AG04450 (cell line): ENCODE measurements at regions of chr5 and their contacts with region 1.

Region 1: DNA sequence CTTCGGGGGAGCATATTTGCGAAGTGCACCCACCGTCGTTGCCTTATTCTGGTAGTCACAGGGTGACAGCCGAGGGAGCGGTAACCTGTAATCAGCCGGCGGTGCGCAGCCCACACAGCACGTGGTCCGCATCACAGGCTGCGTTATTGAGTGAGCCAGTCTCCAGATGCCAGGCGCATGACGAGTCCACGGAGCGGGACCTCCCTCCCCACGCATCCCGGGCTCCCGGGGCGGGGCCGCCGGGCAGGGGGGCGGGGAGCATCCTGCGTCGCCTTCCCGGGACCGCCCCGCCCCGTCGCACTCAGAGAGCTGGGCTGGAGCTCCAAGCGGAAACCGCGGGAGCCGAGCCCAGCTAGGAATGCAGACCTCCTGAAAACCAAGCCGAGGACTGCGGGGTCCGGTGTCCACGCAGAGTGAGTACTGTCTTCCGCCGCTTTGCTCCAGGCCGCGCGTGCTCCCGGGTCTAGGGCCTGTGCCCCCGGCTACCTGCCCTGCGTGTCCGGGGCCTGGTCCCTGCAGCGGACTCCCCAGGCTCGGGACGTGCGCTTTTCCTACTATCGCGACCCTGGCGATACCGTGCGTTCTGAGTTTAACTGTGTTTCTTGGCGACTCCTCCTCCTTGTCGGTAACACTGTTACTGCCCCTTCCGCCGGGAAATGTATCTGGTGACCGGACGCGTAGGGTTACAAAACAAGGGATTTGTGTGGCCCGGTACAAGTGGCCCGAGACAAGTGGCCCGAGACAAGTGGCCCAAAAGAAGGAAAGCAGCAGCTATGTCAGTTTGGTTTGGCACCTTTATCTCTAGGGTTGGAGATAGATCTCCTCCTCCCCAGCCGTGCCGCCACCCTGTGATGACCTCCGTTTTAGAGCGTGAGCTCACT is 40.6 kb downstream of the CAST start:
- DNase-seq: peak; percentile 87
- H3K4me3 ChIP-seq: peak overlapping the region; percentile 74
- H3K27ac ChIP-seq: peak overlapping the region; percentile 94
- H3K27me3 ChIP-seq: no peaks in the 10 kb centered on the region
- CTCF ChIP-seq: no peak

Region 2: DNA sequence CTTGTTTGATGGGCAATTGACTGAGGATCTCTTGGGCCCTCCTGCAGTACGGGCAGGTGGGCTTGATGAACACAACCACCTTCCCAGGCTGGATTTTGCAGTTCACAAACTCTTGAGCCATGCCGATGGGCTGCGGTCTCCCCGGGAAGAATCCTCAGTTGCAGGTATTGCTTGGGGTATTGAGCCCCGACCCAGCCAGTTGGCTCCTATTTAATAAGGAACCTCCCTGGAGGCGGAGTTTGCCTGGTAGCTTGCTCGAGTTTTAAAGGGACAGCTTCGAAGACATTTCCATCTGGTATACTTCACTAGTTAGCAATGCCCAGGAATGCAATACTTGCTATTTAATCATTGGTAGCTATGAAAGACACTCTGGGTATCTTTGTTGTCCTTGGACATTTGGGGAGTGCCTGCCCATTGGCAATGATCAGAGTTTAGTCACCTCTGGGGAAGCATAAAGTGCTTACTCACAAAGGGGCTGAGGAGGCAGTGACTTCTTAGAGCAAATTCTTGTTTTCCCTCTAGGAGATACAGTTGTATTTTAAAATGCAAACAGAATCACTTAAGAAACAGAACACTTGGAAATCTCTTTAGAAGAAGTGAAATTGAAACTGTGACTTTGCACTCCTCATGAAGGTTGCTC is 880.1 kb before region 1 on chr5 and contains the start of gene GLRX:
- CTCF ChIA-PET with region 1: no interaction called
- POLR2A ChIA-PET with region 1: interaction called, 11 read pairs
- DNase-seq: peak; percentile 59
- H3K4me3 ChIP-seq: peak within 1 kb of the TSS; percentile 94
- H3K27ac ChIP-seq: peak within 1 kb of the TSS; percentile 100
- H3K27me3 ChIP-seq: no peaks in the 10 kb centered on the region
- CTCF ChIP-seq: no peak
- polyA plus RNA-seq, gene GLRX: 233 and 306 TPM in 2 replicates

Region 3: DNA sequence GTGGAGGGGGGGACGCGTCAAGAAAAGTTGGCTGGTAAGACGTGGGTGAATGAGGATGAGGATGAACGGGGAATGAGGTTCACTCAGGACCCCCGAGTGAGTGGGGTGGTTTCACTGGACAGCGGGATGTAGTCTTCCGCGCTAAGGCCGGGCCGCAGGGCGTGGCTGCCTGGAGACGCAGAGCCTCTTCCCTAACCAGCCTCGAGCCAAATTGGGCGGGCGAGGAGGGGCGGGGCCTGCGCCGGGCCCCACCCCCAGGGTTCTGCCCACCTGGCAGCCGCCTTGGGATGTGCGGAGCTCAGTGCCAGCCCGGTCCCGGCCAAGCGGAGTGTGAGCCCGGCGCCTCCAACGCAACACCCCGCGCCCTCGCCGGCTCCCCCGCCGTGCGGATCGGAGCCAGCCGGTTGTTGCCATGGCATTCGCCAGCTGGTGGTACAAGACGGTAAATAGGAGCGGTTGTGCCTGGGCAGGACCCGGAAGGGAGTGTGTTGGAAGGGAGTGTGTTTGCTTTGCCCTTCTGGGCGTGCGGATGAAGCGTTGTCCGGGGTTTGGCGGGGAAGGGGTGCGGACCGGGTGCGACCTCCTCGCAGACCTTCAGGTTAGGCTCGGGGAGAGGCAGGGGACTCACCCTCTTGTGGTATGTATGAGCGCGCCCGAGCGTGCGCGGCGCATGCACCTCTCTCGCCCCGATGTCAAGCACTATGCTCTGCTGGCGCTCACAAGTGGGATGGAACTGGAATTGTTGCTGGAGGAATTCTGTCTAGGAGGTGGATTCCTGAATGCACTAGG is 39.8 kb before region 1 on chr5:
- CTCF ChIA-PET with region 1: no interaction called
- POLR2A ChIA-PET with region 1: interaction called, 10 read pairs
- DNase-seq: peak; percentile 47
- H3K4me3 ChIP-seq: peak overlapping the region; percentile 86
- H3K27ac ChIP-seq: peak overlapping the region; percentile 85
- H3K27me3 ChIP-seq: no peaks in the 10 kb centered on the region
- CTCF ChIP-seq: peak; percentile 11; the same call in 1 of the 2 replicates

Region 4: GRCh38 chr5:96743065-96743768 is 40.5 kb after region 1 on chr5:
- CTCF ChIA-PET with region 1: no interaction called
- POLR2A ChIA-PET with region 1: no interaction called
- DNase-seq: no peak
- H3K4me3 ChIP-seq: no peak overlapping the region
- H3K27ac ChIP-seq: no peak overlapping the region
- H3K27me3 ChIP-seq: no peaks in the 10 kb centered on the region
- CTCF ChIP-seq: no peak